ENCODE measurements at regions of chr13 and their contacts with region 1.

Region 1: DNA sequence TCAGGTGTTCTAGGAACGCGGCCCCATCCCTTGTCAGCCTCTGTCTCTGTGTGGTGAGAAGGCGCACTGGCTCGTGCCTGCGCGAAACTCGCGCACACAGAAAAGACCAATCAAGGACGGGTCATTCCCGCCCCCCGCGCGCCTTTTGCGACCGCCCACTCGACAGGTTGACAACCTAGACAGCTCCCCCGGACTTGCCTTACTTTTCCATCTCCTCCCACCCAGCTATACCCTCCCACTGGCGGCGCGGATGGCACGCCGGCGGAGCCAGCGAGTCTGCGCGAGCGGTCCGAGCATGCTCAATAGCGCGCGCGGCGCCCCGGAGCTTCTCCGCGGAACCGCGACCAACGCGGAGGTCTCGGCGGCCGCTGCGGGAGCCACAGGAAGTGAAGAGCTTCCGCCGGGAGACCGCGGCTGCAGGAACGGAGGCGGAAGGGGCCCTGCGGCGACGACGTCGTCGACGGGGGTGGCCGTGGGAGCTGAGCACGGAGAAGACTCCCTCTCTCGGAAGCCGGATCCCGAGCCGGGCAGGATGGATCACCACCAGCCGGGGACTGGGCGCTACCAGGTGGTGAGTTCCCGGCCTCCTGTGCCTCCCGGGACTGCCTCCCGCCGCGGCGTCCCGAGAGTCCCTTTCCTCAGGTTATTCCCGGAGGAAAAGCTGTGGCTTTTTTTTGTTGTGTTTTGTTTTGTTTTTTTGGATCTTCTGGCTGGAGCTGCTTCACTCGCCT is at the start of gene NDFIP2:
- DNase-seq: peak; percentile 83 to 89
- ATAC-seq: peak; percentile 72 to 88 (median 82)
- H3K4me3 ChIP-seq: peak within 1 kb of the TSS; percentile 79
- H3K4me3 Mint-ChIP-seq: peak within 1 kb of the TSS; percentile 96
- H3K27ac ChIP-seq: peak within 1 kb of the TSS; percentile 31
- H3K27ac Mint-ChIP-seq: peak within 1 kb of the TSS; percentile 90 to 96
- H3K4me1 ChIP-seq: peaks cover 11% of the 10 kb centered on the region
- H3K4me1 Mint-ChIP-seq: peaks cover 40 to 47% of the 10 kb centered on the region in 2 donors
- H3K27me3 ChIP-seq: peaks cover 26% of the 10 kb centered on the region
- H3K27me3 Mint-ChIP-seq: peaks cover 15 to 26% of the 10 kb centered on the region in 2 donors
- CTCF ChIP-seq: no peak
- total RNA-seq, gene NDFIP2: 2.6 to 9.6 (median 3.6) TPM

Region 2: GRCh38 chr13:79451500-79451962 is 29.6 kb before region 1 on chr13:
- intact Hi-C with region 1: loop called (anchors 1 kb)
- DNase-seq: peak; percentile 78 to 90
- ATAC-seq: peak; percentile 96 to 100 (median 98)
- H3K4me3 ChIP-seq: no peak overlapping the region
- H3K4me3 Mint-ChIP-seq: peak overlapping the region; percentile 45
- H3K27ac ChIP-seq: peak overlapping the region; percentile 24
- H3K27ac Mint-ChIP-seq: peak overlapping the region; percentile 84 to 87
- H3K4me1 ChIP-seq: peaks cover 15% of the 10 kb centered on the region
- H3K4me1 Mint-ChIP-seq: peaks cover 46 to 50% of the 10 kb centered on the region in 2 donors
- H3K27me3 ChIP-seq: no peaks in the 10 kb centered on the region
- H3K27me3 Mint-ChIP-seq: no peaks in the 10 kb centered on the region
- CTCF ChIP-seq: no peak

Region 3: DNA sequence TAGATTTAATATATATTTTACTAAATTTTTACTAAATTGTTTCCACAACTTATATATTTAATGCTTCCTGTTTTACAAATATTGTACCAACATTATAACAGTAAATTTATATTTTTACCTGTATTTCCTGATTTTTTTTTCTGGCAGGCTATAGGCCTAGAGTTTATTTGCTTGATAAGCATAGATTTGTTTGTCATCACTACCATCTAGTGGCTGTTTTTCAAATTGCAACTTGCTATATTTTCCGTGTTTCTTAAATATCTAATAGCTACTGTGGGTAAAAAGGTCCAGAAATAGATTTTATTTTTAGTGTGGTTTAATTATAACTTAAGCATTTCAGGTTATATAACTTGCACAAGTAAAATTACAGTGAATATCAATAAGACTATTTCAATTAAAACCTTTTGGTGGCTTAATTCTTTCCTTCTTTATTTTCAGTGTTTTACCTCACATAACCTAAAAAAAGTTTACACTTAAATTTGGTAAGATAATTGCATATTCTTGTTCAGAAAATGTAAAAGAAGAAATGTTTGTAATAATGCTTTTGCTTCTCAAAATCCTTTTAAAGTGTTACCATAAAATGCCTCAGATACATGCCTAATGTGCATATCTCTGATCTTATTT is 60.4 kb after region 1 on chr13:
- intact Hi-C with region 1: loop called (anchors 5 kb)
- DNase-seq: peak in 1 of 2 donors; percentile 83
- ATAC-seq: peak; percentile 63 to 77 (median 76)
- H3K4me3 ChIP-seq: no peak overlapping the region
- H3K4me3 Mint-ChIP-seq: no peak overlapping the region
- H3K27ac ChIP-seq: no peak overlapping the region
- H3K27ac Mint-ChIP-seq: no peak overlapping the region
- H3K4me1 ChIP-seq: no peaks in the 10 kb centered on the region
- H3K4me1 Mint-ChIP-seq: no peaks in the 10 kb centered on the region
- H3K27me3 ChIP-seq: no peaks in the 10 kb centered on the region
- H3K27me3 Mint-ChIP-seq: no peaks in the 10 kb centered on the region
- CTCF ChIP-seq: peak; percentile 97

Region 4: GRCh38 chr13:79560953-79561352 is 79.8 kb after region 1 on chr13:
- intact Hi-C with region 1: no loop called
- DNase-seq: no peak
- ATAC-seq: no peak
- H3K4me3 ChIP-seq: no peak overlapping the region
- H3K4me3 Mint-ChIP-seq: no peak overlapping the region
- H3K27ac ChIP-seq: no peak overlapping the region
- H3K27ac Mint-ChIP-seq: no peak overlapping the region
- H3K4me1 ChIP-seq: no peaks in the 10 kb centered on the region
- H3K4me1 Mint-ChIP-seq: no peaks in the 10 kb centered on the region
- H3K27me3 ChIP-seq: no peaks in the 10 kb centered on the region
- H3K27me3 Mint-ChIP-seq: peaks cover 7 to 13% of the 10 kb centered on the region in 2 donors
- CTCF ChIP-seq: no peak

Region 5: DNA sequence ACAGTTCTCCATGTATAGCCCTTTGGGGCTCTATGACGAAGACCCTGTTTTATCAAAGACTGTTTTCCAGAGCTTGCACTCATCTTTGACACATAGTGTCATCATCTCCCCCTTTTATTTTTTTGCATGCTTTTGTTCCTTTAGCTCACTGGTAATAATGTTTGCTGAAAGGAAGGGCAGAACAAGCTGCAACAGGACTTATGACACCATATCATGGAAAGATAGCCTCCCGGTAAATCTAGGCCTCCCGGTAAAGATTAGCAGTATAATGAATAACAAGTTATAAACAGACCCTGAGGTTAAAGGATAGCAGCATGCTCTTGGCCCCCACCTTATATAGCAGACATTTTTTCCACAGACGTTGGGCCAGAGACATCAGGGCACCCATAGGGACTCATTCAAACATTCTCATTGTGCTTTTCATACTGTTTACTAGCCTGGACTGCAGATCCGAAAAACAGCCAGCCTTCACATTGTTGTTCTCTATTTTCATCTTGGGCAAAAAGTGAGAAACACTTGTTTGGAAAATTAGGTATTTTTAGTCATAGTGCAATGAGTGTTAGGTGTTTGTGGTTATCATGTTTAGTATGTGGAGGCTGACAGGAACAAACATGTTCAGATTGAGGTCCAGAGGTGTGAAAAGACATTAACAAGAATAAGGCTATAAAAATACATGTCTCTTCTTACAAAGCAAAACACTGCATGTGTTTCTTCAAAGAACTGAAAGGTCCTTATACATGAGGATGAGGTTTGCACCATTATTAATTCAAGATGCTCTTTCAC is 996.7 kb after region 1 on chr13:
- intact Hi-C with region 1: loop called (anchors 5 kb)
- DNase-seq: peak in 1 of 2 donors; percentile 43
- ATAC-seq: peak; percentile 81 to 96 (median 84)
- H3K4me3 ChIP-seq: no peak overlapping the region
- H3K4me3 Mint-ChIP-seq: peak overlapping the region; percentile 64
- H3K27ac ChIP-seq: peak overlapping the region; percentile 61
- H3K27ac Mint-ChIP-seq: peak overlapping the region; percentile 50 to 67
- H3K4me1 ChIP-seq: peaks cover 21% of the 10 kb centered on the region
- H3K4me1 Mint-ChIP-seq: peaks cover 45 to 55% of the 10 kb centered on the region in 2 donors
- H3K27me3 ChIP-seq: no peaks in the 10 kb centered on the region
- H3K27me3 Mint-ChIP-seq: peaks cover 0 to 10% of the 10 kb centered on the region in 2 donors
- CTCF ChIP-seq: no peak